Activated CD4-positive, alpha-beta T cell treated with anti-CD3 and anti-CD28 coated beads, Interleukin-2, amount 10 ng/mL, durations not matched to agents 24 days and 14 days (primary cell): ENCODE measurements at regions of chr14 and their contacts with region 1.

Region 1: GRCh38 chr14:100654814-100655740 is 67.9 kb upstream of the BEGAIN start:
- DNase-seq: peak; percentile 87
- H3K4me3 Mint-ChIP-seq: no peak overlapping the region
- H3K27ac Mint-ChIP-seq: no peak overlapping the region
- H3K4me1 Mint-ChIP-seq: peaks cover 5% of the 10 kb centered on the region
- H3K27me3 Mint-ChIP-seq: peaks cover 10% of the 10 kb centered on the region

Region 2: GRCh38 chr14:100383727-100384158 is 271.3 kb before region 1 on chr14:
- intact Hi-C with region 1: loop called (anchors 2 kb)
- DNase-seq: peak; percentile 90
- H3K4me3 Mint-ChIP-seq: no peak overlapping the region
- H3K27ac Mint-ChIP-seq: no peak overlapping the region
- H3K4me1 Mint-ChIP-seq: peaks cover 15% of the 10 kb centered on the region
- H3K27me3 Mint-ChIP-seq: no peaks in the 10 kb centered on the region

Region 3: GRCh38 chr14:100440187-100440631 is 214.9 kb before region 1 on chr14:
- intact Hi-C with region 1: loop called (anchors 2 kb)
- DNase-seq: peak; percentile 78
- H3K4me3 Mint-ChIP-seq: no peak overlapping the region
- H3K27ac Mint-ChIP-seq: no peak overlapping the region
- H3K4me1 Mint-ChIP-seq: peaks cover 23% of the 10 kb centered on the region
- H3K27me3 Mint-ChIP-seq: no peaks in the 10 kb centered on the region